MCF 10A (cell line): ENCODE measurements at regions of chr2 and their contacts with region 1.

Region 1: GRCh38 chr2:11764359-11764758 is 17.9 kb downstream of the LPIN1 start:
- DNase-seq: no peak
- H3K4me3 Mint-ChIP-seq: no peak overlapping the region
- H3K27ac Mint-ChIP-seq: peak overlapping the region; percentile 67
- H3K4me1 Mint-ChIP-seq: peaks cover 22% of the 10 kb centered on the region
- H3K27me3 Mint-ChIP-seq: no peaks in the 10 kb centered on the region
- CTCF ChIP-seq: no peak

Region 2: DNA sequence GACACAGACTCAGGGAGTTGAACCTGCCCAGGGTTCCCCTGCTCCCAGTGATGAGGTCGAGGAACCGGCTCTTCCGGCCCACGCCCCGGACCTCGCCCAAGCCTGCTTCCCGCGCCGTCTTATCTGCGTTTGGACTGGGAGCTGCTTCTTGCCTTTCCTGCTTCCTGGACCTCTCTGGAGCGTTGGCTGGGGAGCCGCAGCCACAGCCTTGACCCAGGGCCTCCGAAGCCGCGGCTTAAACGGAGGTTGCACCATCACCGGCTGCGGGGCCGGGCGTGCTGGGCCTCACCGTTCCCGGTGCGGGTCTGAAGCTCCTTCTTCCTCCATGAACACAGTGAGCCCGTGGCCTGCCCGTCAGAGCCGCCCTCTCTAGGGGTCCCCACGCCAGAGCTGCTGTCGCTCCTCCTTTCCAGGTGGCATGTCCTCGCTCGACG is 107.7 kb before region 1 on chr2:
- CTCF ChIA-PET with region 1: no interaction called
- POLR2A ChIA-PET with region 1: no interaction called
- intact Hi-C with region 1: no loop called
- DNase-seq: no peak
- H3K4me3 Mint-ChIP-seq: no peak overlapping the region
- H3K27ac Mint-ChIP-seq: no peak overlapping the region
- H3K4me1 Mint-ChIP-seq: no peaks in the 10 kb centered on the region
- H3K27me3 Mint-ChIP-seq: no peaks in the 10 kb centered on the region
- CTCF ChIP-seq: no peak

Region 3: GRCh38 chr2:11719230-11719977 is 45.0 kb before region 1 on chr2:
- CTCF ChIA-PET with region 1: no interaction called
- POLR2A ChIA-PET with region 1: no interaction called
- intact Hi-C with region 1: no loop called
- DNase-seq: no peak
- H3K4me3 Mint-ChIP-seq: no peak overlapping the region
- H3K27ac Mint-ChIP-seq: no peak overlapping the region
- H3K4me1 Mint-ChIP-seq: peaks cover 21% of the 10 kb centered on the region
- H3K27me3 Mint-ChIP-seq: peaks cover 18% of the 10 kb centered on the region
- CTCF ChIP-seq: no peak

Region 4: GRCh38 chr2:11784747-11785610 is 20.6 kb after region 1 on chr2:
- CTCF ChIA-PET with region 1: interaction called, 21 read pairs
- POLR2A ChIA-PET with region 1: interaction called, 3 read pairs
- intact Hi-C with region 1: no loop called
- DNase-seq: peak; percentile 21
- H3K4me3 Mint-ChIP-seq: no peak overlapping the region
- H3K27ac Mint-ChIP-seq: no peak overlapping the region
- H3K4me1 Mint-ChIP-seq: no peaks in the 10 kb centered on the region
- H3K27me3 Mint-ChIP-seq: no peaks in the 10 kb centered on the region
- CTCF ChIP-seq: peak; percentile 92